Mammary epithelial cell (primary cell): ENCODE measurements at regions of chr10 and their contacts with region 1.

Region 1: GRCh38 chr10:132331526-132332432 is at the start of gene LRRC27:
- DNase-seq: peak; percentile 96
- H3K4me3 ChIP-seq: peak within 1 kb of the TSS; percentile 90 to 99 (median 94)
- H3K27ac ChIP-seq: peak within 1 kb of the TSS; percentile 40
- H3K4me1 ChIP-seq: peaks cover 15% of the 10 kb centered on the region
- H3K27me3 ChIP-seq: no peaks in the 10 kb centered on the region
- CTCF ChIP-seq: no peak
- total RNA-seq, gene LRRC27: 6.1 to 6.8 TPM

Region 2: DNA sequence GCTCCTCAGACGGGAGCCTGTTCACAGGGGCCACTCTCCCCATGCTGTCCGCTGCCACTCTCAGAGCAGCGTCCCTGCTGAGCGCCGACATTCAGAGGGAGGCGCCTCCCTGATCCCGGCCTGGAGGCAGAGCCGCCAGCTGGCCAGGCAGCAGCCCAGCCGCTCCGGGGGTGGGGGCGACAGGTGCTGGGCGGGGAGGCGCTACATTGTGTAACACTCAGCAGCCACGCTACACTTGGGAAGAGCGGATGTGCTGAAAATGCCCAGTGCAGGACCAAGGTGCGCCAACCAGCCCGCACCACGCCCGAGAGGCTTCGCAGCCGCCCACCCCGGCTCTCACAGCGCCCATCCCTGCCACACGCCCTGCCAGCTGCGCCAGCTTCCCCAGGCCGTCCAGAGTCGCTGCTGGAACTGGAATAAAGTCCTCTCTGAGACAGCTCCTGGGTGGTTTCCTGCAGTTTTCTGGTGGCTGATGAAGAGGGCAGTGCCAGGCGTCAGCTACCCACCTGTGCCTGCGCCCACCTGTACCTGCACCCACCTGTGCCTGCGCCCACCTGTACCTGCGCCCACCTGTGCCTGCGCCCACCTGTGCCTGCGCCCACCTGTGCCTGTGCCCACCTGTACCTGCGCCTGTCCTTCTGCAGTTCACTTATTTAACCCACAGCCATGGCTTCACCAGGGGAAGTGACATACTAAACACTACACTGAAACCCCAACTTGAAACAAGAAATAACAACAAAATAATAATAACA is 49.7 kb before region 1 on chr10:
- CTCF ChIA-PET with region 1: no interaction called
- dilution Hi-C with region 1: no loop called
- in situ Hi-C with region 1: no loop called
- intact Hi-C with region 1: no loop called
- DNase-seq: no peak
- H3K4me3 ChIP-seq: no peak overlapping the region
- H3K27ac ChIP-seq: no peak overlapping the region
- H3K4me1 ChIP-seq: no peaks in the 10 kb centered on the region
- H3K27me3 ChIP-seq: peaks cover 6% of the 10 kb centered on the region
- CTCF ChIP-seq: no peak

Region 3: DNA sequence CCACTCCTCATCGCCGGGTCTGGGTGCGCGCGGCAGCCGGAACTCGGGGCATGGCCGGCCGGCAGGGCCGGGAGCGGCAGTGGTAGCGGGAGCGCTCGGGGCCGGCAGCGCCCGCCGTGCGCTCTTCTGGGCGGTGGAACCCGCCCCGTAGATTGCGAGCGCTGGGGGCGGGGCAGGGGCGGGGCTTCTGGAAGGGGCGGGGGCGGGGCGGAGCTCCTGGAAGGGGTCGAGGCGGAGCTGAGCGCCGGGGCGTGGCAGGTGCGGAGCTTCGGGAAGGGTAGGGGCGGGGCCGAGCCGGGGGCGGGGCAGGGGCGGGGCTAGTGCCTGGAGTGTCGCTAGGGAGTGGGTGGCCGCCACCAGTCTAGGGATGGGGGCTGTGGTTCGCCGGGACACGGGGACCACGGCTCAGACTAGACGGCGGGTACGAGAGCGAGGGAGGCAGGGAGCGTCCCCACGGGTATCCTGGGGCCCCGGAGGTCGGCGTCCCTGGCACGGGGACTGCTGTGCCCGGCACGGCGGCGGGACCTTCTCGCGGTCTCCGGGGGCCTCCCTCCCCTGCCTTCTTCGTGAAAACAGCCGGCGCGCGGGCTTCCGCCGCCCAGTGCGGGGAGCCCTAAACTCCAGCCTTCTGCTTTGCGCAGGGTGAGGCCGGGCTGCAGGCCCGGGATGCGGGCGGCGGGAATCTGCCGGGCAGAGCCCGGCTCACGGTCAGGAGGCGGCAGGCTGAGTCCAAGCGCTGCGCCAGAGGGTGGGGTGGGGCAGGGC is 23.8 kb before region 1 on chr10 and contains the start of gene STK32C:
- CTCF ChIA-PET with region 1: no interaction called
- dilution Hi-C with region 1: no loop called
- in situ Hi-C with region 1: no loop called
- intact Hi-C with region 1: loop called (anchors 1 kb)
- DNase-seq: peak; percentile 69
- H3K4me3 ChIP-seq: peak within 1 kb of the TSS; percentile 59 to 83 (median 71)
- H3K27ac ChIP-seq: no peak within 1 kb of the TSS
- H3K4me1 ChIP-seq: peaks cover 14% of the 10 kb centered on the region
- H3K27me3 ChIP-seq: no peaks in the 10 kb centered on the region
- CTCF ChIP-seq: no peak
- total RNA-seq, gene STK32C: 2.5 to 9.2 TPM